ENCODE measurements at regions of chr17 and their contacts with region 1.

Region 1: GRCh38 chr17:78186692-78187595 is at the starts of genes AFMID and TK1:
- DNase-seq: peak; percentile 87
- H3K4me3 Mint-ChIP-seq: peak within 1 kb of the TSS; percentile 95
- H3K27ac Mint-ChIP-seq: peak within 1 kb of the TSS; percentile 86
- H3K4me1 Mint-ChIP-seq: peaks cover 47% of the 10 kb centered on the region
- H3K27me3 Mint-ChIP-seq: no peaks in the 10 kb centered on the region
- total RNA-seq, gene AFMID: 26.2 and 27.7 TPM in 2 replicates
- total RNA-seq, gene TK1: 65.8 and 66.8 TPM in 2 replicates

Region 2: GRCh38 chr17:77995146-77995852 is 191.6 kb before region 1 on chr17:
- intact Hi-C with region 1: no loop called
- DNase-seq: no peak
- H3K4me3 Mint-ChIP-seq: no peak overlapping the region
- H3K27ac Mint-ChIP-seq: no peak overlapping the region
- H3K4me1 Mint-ChIP-seq: no peaks in the 10 kb centered on the region
- H3K27me3 Mint-ChIP-seq: no peaks in the 10 kb centered on the region

Region 3: DNA sequence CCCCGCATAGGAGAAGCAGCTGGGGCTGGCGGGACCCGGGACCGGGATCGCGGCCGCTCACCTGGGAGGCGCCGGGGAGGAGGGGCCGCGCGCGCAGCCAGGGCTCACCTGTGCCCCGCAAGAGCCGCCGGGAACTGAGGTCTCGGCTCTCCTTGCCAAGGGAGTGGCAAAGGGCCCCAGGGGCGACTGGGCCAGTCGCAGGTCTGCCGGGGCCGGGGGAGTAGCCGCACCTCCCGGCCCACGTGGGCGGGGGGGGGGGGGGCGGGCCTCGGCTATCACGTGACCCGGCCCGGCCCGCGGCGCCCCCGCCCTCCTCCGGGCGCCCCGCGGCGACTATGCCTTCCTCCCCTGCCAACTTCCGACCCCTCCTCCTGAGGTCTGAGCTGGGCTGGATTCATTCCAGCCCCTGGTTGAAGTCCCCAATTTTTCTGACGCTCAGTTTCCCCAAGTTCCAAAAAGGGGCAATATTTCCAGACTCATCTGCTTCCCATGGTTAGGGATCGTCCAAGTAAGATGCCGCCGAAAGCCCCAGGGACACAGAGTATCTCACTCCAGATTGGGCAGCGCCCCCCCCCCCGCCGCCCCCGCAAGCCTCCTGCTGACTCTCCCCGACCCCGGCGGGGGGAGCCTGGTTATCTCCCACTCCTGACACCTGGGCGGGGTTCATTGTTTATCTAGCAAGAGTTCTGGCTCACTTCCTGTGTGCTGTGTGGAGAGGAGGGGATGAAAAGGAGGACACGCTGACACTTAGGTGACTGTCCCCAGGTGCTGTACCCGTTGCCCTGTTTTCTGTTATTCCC is 58.2 kb before region 1 on chr17 and contains the start of gene TMC6:
- intact Hi-C with region 1: loop called (anchors 1 kb)
- DNase-seq: peak; percentile 56
- H3K4me3 Mint-ChIP-seq: peak within 1 kb of the TSS; percentile 98
- H3K27ac Mint-ChIP-seq: peak within 1 kb of the TSS; percentile 99
- H3K4me1 Mint-ChIP-seq: peaks cover 44% of the 10 kb centered on the region
- H3K27me3 Mint-ChIP-seq: no peaks in the 10 kb centered on the region
- total RNA-seq, gene TMC6: 265 and 268 TPM in 2 replicates

Region 4: DNA sequence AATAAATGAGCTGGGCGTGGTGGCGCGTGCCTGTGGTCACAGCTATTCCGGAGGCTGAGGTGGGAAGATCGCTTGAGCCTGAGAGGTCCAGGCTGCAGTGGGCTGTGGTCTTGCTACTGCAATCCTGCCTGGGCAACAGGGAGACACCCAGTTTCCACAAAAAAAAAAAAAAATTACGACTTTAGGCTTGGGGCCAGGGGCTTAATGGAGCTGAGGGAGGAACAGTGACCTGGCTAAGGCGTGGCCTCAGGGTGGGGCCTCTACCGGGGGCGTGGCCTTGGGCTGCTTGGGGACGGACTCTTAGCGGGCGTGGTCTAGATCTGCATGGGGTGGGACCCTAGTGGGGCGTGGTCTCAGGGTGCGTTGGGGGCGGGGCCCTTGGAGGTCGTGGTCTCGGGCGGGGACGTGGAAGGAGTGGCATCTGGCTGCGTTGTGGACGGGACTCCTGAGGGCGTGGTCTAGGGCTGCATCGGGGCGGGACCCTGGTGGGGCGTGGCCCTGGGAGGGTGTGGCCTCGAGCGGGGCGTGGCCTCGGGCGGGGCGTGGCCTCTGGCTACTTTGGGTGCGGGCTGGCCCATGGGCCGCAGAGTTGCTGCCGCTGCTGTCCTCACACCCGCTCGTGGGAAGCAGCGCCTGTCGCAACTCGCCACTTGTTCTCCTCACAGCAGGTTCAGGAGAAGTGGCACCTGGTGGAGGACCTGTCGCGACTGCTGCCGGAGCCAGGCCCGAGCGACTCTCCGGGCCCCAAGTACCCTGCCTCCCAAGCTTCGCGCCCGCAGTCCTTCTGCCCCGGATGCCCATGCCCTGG is 46.6 kb before region 1 on chr17:
- intact Hi-C with region 1: loop called (anchors 1 kb)
- DNase-seq: peak; percentile 96
- H3K4me3 Mint-ChIP-seq: peak overlapping the region; percentile 28
- H3K27ac Mint-ChIP-seq: peak overlapping the region; percentile 77
- H3K4me1 Mint-ChIP-seq: peaks cover 40% of the 10 kb centered on the region
- H3K27me3 Mint-ChIP-seq: no peaks in the 10 kb centered on the region

Region 5: GRCh38 chr17:78168242-78168902 is 18.6 kb before region 1 on chr17 and contains the start of gene SYNGR2:
- intact Hi-C with region 1: loop called (anchors 1 kb)
- DNase-seq: peak; percentile 88
- H3K4me3 Mint-ChIP-seq: peak within 1 kb of the TSS; percentile 77
- H3K27ac Mint-ChIP-seq: peak within 1 kb of the TSS; percentile 65
- H3K4me1 Mint-ChIP-seq: peaks cover 28% of the 10 kb centered on the region
- H3K27me3 Mint-ChIP-seq: peaks cover 2% of the 10 kb centered on the region
- total RNA-seq, gene SYNGR2: 131 and 133 TPM in 2 replicates

Region 6: GRCh38 chr17:78214706-78215061 is 27.7 kb after region 1 on chr17:
- intact Hi-C with region 1: loop called (anchors 1 kb)
- DNase-seq: no peak
- H3K4me3 Mint-ChIP-seq: peak overlapping the region; percentile 96
- H3K27ac Mint-ChIP-seq: peak overlapping the region; percentile 91
- H3K4me1 Mint-ChIP-seq: peaks cover 15% of the 10 kb centered on the region
- H3K27me3 Mint-ChIP-seq: peaks cover 2% of the 10 kb centered on the region

Measured in activated T-helper 1 cell treated with anti-CD3 and anti-CD28 coated beads, Interleukin-12 subunit alpha, Interleukin-12 subunit beta, Interleukin-2, Interleukin-4 antibody, amounts not matched to agents 30 ng/mL and 10 ng/mL and 1 ng/mL, durations not matched to agents 14 hours and 24 hours and 36 hours (primary cell).